OCI-LY7 (cell line): ENCODE measurements at regions of chr1 and their contacts with region 1.

Region 1: DNA sequence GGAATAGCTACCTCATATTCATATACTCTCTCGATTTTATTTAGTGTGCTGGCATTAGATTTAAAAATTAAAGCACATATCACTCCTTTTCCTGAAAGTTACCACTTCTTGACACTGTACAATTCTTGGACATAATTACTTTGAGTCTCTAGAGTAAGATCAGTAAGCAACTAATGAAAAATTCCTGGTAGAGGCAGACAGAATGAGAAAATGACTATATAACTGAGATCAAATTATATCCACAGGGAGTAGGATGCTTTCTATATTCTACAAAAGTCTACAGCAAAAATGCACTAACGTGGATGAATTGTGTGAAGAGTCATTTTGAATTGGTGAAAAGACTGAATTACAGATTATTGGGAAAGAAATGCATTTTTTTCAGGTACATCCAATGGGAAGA is 445.7 kb downstream of the PTBP2 start:
- DNase-seq: no peak
- H3K4me3 ChIP-seq: no peak overlapping the region
- H3K27ac ChIP-seq: no peak overlapping the region
- H3K4me1 ChIP-seq: peaks cover 11% of the 10 kb centered on the region
- CTCF ChIP-seq: no peak

Region 2: GRCh38 chr1:97145321-97145956 is 21.8 kb before region 1 on chr1:
- CTCF ChIA-PET with region 1: no interaction called
- POLR2A ChIA-PET with region 1: no interaction called
- intact Hi-C with region 1: no loop called
- DNase-seq: no peak
- H3K4me3 ChIP-seq: no peak overlapping the region
- H3K27ac ChIP-seq: no peak overlapping the region
- H3K4me1 ChIP-seq: no peaks in the 10 kb centered on the region
- CTCF ChIP-seq: no peak

Region 3: DNA sequence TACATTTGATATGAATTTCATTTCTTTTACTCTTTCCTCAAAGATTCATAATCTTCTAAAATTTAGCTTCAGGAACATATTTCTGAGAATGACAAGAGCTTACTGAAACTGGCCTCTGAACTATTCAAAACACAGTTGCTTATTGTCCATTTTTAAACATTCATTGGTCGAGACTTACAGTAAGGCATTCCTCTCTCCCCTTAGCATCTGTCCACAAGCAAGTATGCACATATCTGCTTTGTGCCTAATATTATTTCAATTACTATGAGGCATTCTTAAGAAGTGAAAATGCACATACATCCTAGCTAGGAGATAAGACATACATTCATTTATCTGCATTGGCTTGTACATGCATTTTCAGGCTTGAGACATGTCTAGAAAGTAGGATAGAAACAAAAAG is 43.1 kb after region 1 on chr1:
- CTCF ChIA-PET with region 1: no interaction called
- POLR2A ChIA-PET with region 1: no interaction called
- intact Hi-C with region 1: loop called (anchors 5 kb)
- DNase-seq: no peak
- H3K4me3 ChIP-seq: no peak overlapping the region
- H3K27ac ChIP-seq: no peak overlapping the region
- H3K4me1 ChIP-seq: no peaks in the 10 kb centered on the region
- CTCF ChIP-seq: no peak